Activated T-helper 2 cell treated with anti-CD3 and anti-CD28 coated beads, Interferon-gamma antibody, Interleukin-2, Interleukin-4, amounts not matched to agents 10 μg/mL and 5 μg/mL and 100 μg/mL, durations not matched to agents 14 hours and 24 hours and 36 hours (primary cell): ENCODE measurements at regions of chr10 and their contacts with region 1.

Region 1: DNA sequence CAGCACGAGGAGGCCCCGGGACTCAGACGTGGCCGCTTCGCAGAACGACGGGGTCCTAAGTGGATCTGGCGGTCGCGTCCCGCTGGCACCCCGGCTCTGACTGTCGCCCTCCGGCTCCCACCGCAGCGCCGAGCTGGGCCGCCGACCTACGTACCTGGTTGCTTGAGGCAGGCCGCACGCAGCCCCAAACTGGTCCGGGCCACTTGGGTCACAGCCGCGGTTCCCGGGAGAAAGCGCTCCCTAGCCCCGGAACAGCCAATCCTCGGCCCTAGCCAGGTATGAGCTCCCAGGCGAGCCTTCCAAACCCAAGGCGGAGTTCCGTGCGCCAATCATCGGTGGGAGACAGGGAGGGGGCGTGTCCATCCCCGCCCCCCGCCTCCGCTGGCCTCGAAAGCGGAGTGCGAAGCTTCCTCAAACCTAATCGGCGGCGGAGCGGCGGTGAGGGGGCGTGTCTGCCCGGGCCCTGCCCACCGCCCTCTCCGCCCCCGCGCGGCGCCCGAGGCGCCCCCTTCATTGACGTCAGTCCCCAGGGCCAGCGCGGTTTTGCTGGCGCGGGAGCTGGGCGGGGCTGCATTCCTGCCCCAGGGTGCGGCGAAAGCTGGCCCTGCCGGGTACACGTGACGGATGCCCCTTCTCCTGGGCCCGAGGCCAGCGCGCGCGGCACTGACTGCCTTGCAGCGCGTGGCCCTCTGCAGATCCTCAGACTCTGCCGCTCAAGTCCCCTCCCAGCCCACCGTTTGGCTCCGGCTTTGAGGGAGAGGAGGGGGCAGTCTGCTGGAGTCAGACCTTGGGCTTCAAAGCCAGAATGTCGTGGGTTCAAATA is at the start of gene AVPI1:
- DNase-seq: peak; percentile 93
- H3K4me3 Mint-ChIP-seq: peak within 1 kb of the TSS; percentile 75
- H3K27ac Mint-ChIP-seq: peak within 1 kb of the TSS; percentile 28
- H3K4me1 Mint-ChIP-seq: peaks cover 17% of the 10 kb centered on the region
- H3K27me3 Mint-ChIP-seq: no peaks in the 10 kb centered on the region
- total RNA-seq, gene AVPI1: 2.3 and 2.4 TPM in 2 replicates

Region 2: DNA sequence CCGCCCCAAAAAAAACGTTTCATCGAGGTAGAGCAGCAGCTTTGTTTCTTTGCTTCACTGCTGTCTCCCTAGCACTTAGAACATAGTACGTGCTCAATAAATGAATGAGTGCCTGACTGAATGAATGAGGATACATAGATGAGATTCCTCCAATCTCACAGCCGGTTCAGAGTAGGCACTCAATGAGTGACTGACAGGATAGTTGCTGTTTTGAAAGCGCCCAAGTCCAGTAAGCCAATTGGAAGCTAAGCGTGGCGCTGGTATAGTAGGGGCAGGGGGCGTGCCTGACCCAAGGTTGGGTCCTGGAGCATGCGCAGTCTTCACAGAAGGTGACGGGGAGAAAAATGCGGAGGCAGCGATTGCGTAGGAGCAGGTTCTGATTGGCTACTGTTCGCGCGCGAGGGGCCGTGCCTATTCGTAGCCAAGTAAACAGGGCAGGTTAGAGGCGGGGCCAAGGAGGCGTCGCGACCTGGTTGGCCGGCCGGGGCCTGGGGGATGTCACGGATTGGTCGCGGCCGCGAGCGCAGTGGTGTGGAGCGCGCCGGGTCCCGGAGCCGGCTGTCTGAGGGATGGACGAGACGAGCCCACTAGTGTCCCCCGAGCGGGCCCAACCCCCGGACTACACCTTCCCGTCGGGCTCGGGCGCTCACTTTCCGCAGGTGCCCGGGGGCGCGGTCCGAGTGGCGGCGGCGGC is 46.9 kb before region 1 on chr10 and contains the start of gene PI4K2A:
- intact Hi-C with region 1: loop called (anchors 5 kb)
- DNase-seq: peak; percentile 99
- H3K4me3 Mint-ChIP-seq: peak within 1 kb of the TSS; percentile 92
- H3K27ac Mint-ChIP-seq: peak within 1 kb of the TSS; percentile 84
- H3K4me1 Mint-ChIP-seq: peaks cover 19% of the 10 kb centered on the region
- H3K27me3 Mint-ChIP-seq: no peaks in the 10 kb centered on the region
- total RNA-seq, gene PI4K2A: 15.8 and 17.4 TPM in 2 replicates

Region 3: DNA sequence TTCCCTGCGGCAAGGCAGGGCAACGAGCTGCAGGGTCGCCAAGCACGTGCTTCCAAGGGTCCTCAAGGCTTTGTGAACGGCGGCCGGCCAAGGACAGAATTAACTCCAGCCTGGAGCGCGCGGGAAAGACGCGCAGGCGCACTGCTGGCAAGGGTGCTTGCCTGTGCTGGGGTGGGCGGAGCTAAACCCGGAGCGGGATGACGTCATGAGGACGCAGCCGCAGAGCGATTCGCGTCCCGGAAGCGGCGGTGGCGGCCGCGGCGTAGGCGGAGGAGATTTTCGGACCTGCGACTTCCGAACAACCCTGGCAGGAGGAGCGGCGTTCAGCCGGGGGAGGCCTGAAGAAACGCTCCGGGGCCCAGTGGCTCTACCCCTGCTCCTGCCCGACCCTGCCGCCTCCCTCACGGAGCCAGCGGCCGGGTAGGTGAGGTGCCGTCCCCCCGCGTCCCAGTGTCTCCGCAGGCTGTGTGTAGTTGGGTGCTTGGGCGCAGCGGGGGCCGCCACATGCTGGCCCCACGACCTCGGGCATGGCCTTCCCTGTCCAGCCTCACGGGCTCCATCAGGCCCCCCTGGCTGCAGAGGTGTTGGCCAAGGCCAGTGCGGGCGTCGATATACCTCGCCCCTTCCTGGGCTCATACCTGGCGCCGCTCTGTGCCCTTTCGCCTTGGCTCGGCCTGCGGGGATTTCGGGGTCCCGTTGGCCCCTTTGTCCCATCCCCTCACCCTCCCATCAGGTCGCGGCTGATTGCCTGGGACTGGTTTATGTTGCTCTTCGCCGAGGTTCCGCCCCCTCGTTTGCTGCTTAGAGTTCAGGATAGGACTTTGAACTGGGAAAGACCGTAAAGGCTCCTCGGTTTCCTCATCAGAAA is 50.0 kb after region 1 on chr10 and contains the start of gene ZFYVE27:
- intact Hi-C with region 1: loop called (anchors 1 kb)
- DNase-seq: peak; percentile 94
- H3K4me3 Mint-ChIP-seq: peak within 1 kb of the TSS; percentile 93
- H3K27ac Mint-ChIP-seq: peak within 1 kb of the TSS; percentile 93
- H3K4me1 Mint-ChIP-seq: peaks cover 36% of the 10 kb centered on the region
- H3K27me3 Mint-ChIP-seq: no peaks in the 10 kb centered on the region
- total RNA-seq, gene ZFYVE27: 35.0 and 40.2 TPM in 2 replicates